Activated CD8-positive, alpha-beta T cell treated with anti-CD3 and anti-CD28 coated beads for 36 hours (primary cell): ENCODE measurements at regions of chr1 and their contacts with region 1.

Region 1: DNA sequence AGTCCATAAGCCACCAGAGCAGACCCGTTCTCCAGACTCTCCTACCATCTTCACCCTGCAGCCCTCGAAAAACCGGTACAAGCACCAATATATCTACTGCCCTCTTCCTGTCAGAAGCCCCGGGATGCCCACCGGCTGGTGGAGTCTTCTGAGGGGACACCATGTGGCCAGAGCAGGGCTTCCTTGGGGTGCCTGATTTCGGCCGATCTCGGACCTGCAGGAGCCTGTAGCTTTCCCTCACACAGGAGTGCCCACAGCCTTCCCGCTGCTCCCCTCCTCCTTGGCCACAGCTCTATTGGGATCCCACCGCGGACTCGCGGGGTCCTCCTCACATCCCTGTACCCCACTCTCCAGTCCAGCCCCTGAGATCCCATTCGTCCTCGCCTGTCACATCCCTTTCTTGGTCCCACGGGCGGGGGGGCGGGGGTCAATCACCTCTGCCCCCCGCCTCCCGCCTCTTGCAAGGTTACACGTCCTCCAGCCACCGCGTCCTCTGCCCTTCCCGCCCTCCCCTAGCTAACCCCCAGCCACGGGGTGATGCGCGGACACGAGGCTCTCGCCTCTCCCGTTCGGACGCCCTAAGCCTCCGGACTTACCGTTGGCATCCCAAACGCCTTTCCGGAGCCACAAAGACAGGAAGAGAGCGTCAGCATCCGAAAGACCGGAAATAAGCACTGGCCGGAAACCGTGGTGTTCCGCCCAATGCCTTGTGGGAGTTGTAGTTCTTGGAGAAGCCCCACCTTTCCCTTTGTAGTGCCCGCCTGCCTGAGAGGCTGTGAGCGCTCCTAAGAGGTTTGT is at the start of gene SSR2:
- DNase-seq: peak; percentile 92
- ATAC-seq: peak; percentile 100
- H3K4me3 Mint-ChIP-seq: peak within 1 kb of the TSS; percentile 82
- H3K27ac Mint-ChIP-seq: peak within 1 kb of the TSS; percentile 94
- H3K4me1 Mint-ChIP-seq: peaks cover 22% of the 10 kb centered on the region
- H3K27me3 Mint-ChIP-seq: peaks cover 4% of the 10 kb centered on the region
- CTCF ChIP-seq: no peak
- total RNA-seq, gene SSR2: 148 to 150 TPM

Region 2: DNA sequence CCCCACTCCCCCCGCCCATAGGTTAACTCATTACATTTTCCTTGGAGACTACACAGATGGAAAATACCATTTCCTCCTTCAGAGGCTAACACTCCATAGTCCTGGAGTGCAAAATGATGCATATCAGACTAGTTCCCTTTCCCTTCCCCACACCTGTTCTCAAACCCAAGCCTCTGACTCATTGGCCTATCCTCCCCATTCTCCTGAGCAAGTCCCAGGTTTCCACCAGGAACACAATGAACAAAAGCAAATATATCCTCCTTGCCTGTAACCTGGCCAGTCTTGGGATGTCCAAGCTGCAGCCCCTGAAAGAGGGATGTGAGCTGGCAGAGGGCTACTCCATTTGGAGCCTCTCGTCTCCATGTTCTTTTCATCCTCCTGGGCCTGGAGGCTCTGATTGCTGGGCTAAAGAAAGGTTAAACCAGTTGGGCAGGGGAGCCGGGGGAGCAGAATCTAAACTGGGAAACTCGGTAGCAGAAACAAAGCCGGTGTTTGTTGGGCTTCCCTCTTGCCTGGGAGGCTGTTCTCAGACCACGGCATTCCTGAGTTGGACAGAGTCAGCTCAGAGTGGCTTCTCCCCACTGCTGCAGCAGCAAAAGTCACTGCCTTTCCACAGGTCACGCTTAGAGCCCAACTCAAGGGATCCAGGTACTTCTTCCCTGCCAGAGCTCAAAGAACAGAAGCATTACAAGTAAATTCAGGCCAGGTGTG is 13.7 kb before region 1 on chr1:
- CTCF ChIA-PET with region 1: interaction called, 5 read pairs
- POLR2A ChIA-PET with region 1: interaction called, 17 read pairs
- intact Hi-C with region 1: no loop called
- DNase-seq: no peak
- ATAC-seq: no peak
- H3K4me3 Mint-ChIP-seq: no peak overlapping the region
- H3K27ac Mint-ChIP-seq: peak overlapping the region; percentile 48
- H3K4me1 Mint-ChIP-seq: peaks cover 16% of the 10 kb centered on the region
- H3K27me3 Mint-ChIP-seq: no peaks in the 10 kb centered on the region
- CTCF ChIP-seq: no peak

Region 3: GRCh38 chr1:156054500-156055280 is 34.2 kb after region 1 on chr1 and contains the start of gene LAMTOR2:
- CTCF ChIA-PET with region 1: interaction called, 3 read pairs
- POLR2A ChIA-PET with region 1: interaction called, 5 read pairs
- intact Hi-C with region 1: loop called (anchors 2 kb)
- DNase-seq: peak; percentile 99
- ATAC-seq: peak; percentile 78
- H3K4me3 Mint-ChIP-seq: peak within 1 kb of the TSS; percentile 96
- H3K27ac Mint-ChIP-seq: peak within 1 kb of the TSS; percentile 95
- H3K4me1 Mint-ChIP-seq: peaks cover 22% of the 10 kb centered on the region
- H3K27me3 Mint-ChIP-seq: no peaks in the 10 kb centered on the region
- CTCF ChIP-seq: no peak
- total RNA-seq, gene LAMTOR2: 48.9 to 49.4 TPM

Region 4: DNA sequence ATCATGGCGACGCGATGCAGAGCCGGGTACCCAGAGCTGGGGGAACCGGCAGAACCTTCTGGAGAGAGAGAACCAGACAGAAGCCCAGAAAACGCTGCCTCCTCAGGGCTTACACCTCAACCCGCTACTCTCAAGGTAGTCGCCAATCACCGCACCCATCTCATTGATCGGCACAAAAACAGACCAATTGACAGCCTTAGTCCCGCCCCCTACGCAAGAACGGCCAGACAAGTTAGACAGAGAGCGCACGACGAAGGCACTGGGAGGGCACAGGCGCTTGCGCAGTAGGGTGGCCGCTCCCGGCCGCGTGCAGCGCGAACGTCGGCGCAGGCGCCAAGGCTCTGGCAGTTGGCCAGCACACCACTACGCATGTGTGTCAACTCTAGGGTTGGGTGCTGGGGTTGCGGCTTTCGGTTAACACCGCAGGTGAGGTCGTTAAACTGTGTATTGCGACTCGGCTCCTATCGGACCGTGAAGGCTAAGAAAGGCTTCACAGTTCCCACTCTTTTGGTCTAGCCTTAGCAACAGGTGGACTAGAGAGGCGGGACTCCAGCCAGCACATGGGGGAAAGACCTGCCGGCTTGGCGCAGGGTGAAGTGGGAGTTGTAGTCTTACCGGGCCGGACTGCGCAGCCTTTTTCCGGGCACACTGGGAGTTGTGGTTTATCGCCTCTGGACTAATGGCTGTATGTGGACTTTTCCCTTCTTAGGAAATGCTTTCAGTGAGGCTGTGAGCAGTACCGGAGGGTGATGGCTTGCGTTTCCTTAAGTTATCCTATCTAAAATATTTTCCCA is 317.9 kb after region 1 on chr1 and contains the starts of genes CCT3 and TSACC:
- CTCF ChIA-PET with region 1: no interaction called
- POLR2A ChIA-PET with region 1: no interaction called
- intact Hi-C with region 1: no loop called
- DNase-seq: peak; percentile 99
- ATAC-seq: peak; percentile 95
- H3K4me3 Mint-ChIP-seq: peak within 1 kb of the TSS; percentile 98
- H3K27ac Mint-ChIP-seq: peak within 1 kb of the TSS; percentile 99
- H3K4me1 Mint-ChIP-seq: peaks cover 27% of the 10 kb centered on the region
- H3K27me3 Mint-ChIP-seq: no peaks in the 10 kb centered on the region
- CTCF ChIP-seq: no peak
- total RNA-seq, gene CCT3: 379 to 388 TPM
- total RNA-seq, gene TSACC: 0.72 TPM in 1 of 2 experiments, not detected in the other